HepG2 (cell line): ENCODE measurements at regions of chr2 and their contacts with region 1.

Region 1: DNA sequence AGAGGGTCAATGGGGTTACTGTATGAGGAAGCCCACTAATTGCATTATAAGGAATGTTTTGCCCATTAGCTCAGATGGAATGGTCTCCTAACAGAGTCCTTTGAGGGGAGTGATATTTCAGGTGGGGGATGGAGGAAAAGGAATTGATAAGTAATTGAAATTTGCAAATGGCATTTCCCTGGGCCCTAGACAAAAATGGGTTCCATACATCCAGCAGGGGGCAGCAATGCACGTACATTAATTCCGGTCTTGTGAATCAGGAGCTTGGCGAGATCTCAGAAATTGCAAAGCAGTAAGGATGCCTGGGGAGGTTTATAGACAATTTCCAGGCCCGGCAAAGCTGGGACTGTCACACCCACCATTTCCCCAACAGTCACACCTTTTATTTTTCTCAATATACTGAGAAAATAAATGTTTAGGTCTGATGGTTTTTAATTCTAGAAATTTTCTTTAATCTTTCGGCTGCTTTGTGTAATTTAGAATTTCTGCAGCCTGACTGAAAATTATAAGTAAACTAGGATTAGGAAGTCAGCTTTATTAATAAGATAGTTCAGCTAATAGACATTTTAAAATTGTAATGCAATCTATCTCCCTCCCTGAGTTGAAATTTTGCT is 122.8 kb downstream of the LYPD1 start:
- DNase-seq: peak; percentile 59
- ATAC-seq: peak; percentile 75
- H3K4me3 ChIP-seq: no peak overlapping the region
- H3K27ac ChIP-seq: no peak overlapping the region
- H3K4me1 ChIP-seq: no peaks in the 10 kb centered on the region
- H3K27me3 ChIP-seq: no peaks in the 10 kb centered on the region
- CTCF ChIP-seq: peak; percentile 78
- EP300 ChIP-seq: no peak
- POLR2A ChIP-seq: no peak
- RAD21 ChIP-seq: peak; percentile 56; the same call in 1 of the 2 replicates

Region 2: DNA sequence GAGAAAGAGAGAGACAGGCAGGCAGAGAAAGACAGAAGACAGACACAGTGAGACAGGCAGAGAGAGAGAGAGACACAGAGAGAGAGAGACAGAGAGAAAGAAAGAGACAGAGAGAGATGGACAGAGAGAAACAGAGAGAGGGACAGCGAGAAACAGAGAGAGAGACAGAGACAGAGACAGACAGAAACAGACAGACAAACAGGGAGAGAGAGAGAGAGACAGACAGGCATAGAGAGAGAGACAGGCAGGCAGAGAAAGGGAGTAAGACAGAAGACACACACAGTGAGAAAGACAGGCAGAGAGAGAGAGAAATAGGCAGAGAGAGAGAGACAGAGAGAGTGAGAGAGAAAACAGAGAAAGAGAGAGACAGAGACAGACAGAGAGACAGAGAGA is 280.1 kb before region 1 on chr2:
- CTCF ChIA-PET with region 1: interaction called, 3 read pairs
- POLR2A ChIA-PET with region 1: no interaction called
- in situ Hi-C with region 1: no loop called
- intact Hi-C with region 1: loop called (anchors 1 kb)
- DNase-seq: no peak
- ATAC-seq: no peak
- H3K4me3 ChIP-seq: no peak overlapping the region
- H3K27ac ChIP-seq: no peak overlapping the region
- H3K4me1 ChIP-seq: no peaks in the 10 kb centered on the region
- H3K27me3 ChIP-seq: 0 out of 5 replicates have a peak, but pooled peaks cover 0 to 7% of the 10 kb centered on the region in 2 experiments
- CTCF ChIP-seq: no peak
- EP300 ChIP-seq: no peak
- POLR2A ChIP-seq: no peak
- RAD21 ChIP-seq: no peak

Region 3: DNA sequence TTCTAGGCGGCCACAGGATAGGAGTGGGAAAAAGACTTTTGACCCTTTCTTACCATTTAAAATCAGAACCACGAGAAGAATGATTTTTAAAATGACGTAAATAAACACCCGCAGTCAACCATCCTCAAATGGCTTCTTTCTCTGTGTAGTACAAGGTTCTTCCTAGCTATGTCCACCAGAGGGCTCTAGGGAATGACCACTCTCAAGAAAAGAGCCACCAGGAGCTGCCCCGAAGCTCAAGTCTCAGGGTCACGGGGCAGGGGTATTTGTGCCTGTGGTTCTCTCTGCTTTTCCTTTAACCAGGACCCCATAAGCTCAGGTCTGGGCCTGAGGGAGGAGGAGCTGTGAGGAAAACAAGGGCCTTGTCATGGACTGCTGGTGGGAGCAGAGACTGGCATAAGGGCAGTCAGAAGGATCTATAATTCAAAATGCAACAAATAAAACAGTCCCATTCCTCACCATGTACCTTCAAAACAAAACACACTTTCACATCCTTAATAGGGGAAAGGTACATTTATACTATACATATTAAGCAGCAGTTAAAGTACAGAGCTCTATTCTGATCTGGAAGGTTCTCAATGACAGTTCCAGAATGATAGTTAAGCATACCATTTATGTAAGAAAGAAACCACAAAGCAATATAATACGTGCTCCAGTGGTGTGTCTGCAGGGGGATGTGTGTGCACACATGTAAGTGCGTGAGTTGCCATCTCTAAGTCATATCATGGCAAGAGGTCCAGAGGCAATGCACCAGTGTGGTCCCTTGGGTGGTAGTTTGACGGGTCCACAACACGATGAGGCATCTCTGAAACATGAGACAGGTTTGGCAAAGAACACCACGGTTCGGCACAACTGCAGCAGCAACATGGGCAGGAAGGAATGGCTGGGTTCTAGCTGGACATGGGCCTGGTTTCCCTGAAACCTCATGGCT is 104.2 kb after region 1 on chr2:
- CTCF ChIA-PET with region 1: no interaction called
- POLR2A ChIA-PET with region 1: no interaction called
- in situ Hi-C with region 1: no loop called
- intact Hi-C with region 1: loop called (anchors 5 kb)
- DNase-seq: peak; percentile 59
- ATAC-seq: peak; percentile 99
- H3K4me3 ChIP-seq: no peak overlapping the region
- H3K27ac ChIP-seq: no peak overlapping the region
- H3K4me1 ChIP-seq: no peaks in the 10 kb centered on the region
- H3K27me3 ChIP-seq: no peaks in the 10 kb centered on the region
- CTCF ChIP-seq: peak; percentile 76
- EP300 ChIP-seq: no peak
- POLR2A ChIP-seq: no peak
- RAD21 ChIP-seq: 0 out of 2 replicates have a peak, but pooled peaks have one; percentile 39

Region 4: GRCh38 chr2:132676999-132677398 is 129.8 kb after region 1 on chr2:
- CTCF ChIA-PET with region 1: no interaction called
- POLR2A ChIA-PET with region 1: no interaction called
- in situ Hi-C with region 1: no loop called
- intact Hi-C with region 1: no loop called
- DNase-seq: no peak
- ATAC-seq: no peak
- H3K4me3 ChIP-seq: no peak overlapping the region
- H3K27ac ChIP-seq: no peak overlapping the region
- H3K4me1 ChIP-seq: no peaks in the 10 kb centered on the region
- H3K27me3 ChIP-seq: no peaks in the 10 kb centered on the region
- CTCF ChIP-seq: no peak
- EP300 ChIP-seq: no peak
- POLR2A ChIP-seq: no peak
- RAD21 ChIP-seq: no peak

Region 5: GRCh38 chr2:132857319-132857718 is 310.1 kb after region 1 on chr2:
- CTCF ChIA-PET with region 1: no interaction called
- POLR2A ChIA-PET with region 1: no interaction called
- in situ Hi-C with region 1: no loop called
- intact Hi-C with region 1: loop called (anchors 2 kb)
- DNase-seq: no peak
- ATAC-seq: no peak
- H3K4me3 ChIP-seq: no peak overlapping the region
- H3K27ac ChIP-seq: no peak overlapping the region
- H3K4me1 ChIP-seq: peaks cover 9% of the 10 kb centered on the region
- H3K27me3 ChIP-seq: no peaks in the 10 kb centered on the region
- CTCF ChIP-seq: no peak
- EP300 ChIP-seq: no peak
- POLR2A ChIP-seq: no peak
- RAD21 ChIP-seq: no peak

Region 6: DNA sequence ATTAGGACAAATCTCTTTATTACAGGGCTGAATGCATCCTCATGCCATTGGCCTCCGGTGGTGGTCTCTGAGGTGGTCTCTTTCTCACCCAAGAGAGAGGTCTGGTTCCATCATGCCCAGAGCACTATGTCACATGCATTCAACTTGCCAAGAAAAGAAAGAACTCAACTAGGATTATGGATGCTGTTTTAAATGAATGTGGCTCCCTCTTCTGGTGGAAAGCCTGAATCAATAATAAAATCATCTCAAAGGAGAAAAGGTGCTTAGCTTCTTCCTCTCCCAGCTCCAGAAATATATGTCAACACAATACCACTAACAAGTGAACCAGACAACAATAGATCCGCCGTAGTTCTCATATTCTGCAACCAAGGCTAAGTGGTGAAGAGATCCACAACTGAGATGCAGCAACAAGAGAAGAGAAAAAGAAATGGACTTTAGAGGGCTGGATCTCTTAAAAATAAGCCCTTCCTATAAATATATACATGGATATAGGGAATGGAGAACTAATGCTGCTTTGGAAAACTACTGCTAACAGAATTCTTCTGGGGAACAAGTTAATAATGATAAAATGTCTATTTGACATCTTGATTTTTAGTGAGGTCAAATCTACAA is 624.3 kb after region 1 on chr2:
- CTCF ChIA-PET with region 1: interaction called, 14 read pairs
- POLR2A ChIA-PET with region 1: no interaction called
- in situ Hi-C with region 1: loop called (anchors 5 kb)
- intact Hi-C with region 1: no loop called
- DNase-seq: peak; percentile 58
- ATAC-seq: peak; percentile 73
- H3K4me3 ChIP-seq: no peak overlapping the region
- H3K27ac ChIP-seq: no peak overlapping the region
- H3K4me1 ChIP-seq: no peaks in the 10 kb centered on the region
- H3K27me3 ChIP-seq: no peaks in the 10 kb centered on the region
- CTCF ChIP-seq: peak; percentile 84
- EP300 ChIP-seq: no peak
- POLR2A ChIP-seq: no peak
- RAD21 ChIP-seq: peak; percentile 75

Region 7: DNA sequence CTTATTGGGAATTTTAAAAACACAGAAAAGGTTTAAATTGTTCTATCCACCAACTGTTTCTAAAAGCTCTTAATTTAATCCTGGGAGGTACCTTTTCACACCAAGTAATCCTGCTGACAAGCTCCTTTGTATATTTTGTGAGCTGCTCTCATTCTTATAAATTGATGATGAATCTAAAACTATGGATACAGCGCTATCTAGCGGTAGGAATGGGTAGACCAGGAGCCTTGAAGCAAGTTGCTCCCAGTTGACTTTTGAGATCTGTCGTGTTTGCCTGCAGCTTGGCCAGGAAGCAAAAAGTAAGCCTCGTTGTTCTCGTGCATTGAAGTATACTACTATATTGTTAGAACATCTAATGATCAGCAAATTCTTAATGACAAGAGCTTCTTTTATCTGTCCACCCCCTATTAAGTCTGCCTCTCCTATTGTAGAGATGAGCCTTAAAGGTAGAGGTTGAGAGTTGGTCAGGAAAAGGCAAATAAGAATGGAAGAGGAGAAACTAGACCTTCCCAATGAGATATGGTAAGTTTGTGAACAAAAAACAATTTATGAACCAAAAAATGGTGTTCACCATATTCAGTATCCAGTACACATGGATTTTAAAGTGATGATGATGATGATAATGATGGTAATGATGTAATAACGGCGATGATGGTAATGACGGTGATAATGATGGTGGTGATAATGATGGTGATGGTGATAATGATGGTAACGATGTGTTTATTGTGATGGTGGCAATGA is 1233.1 kb after region 1 on chr2:
- CTCF ChIA-PET with region 1: interaction called, 5 read pairs
- POLR2A ChIA-PET with region 1: no interaction called
- in situ Hi-C with region 1: no loop called
- intact Hi-C with region 1: loop called (anchors 2 kb)
- DNase-seq: peak; percentile 70
- ATAC-seq: peak; percentile 83
- H3K4me3 ChIP-seq: no peak overlapping the region
- H3K27ac ChIP-seq: no peak overlapping the region
- H3K4me1 ChIP-seq: peaks cover 9% of the 10 kb centered on the region
- H3K27me3 ChIP-seq: peaks cover 0 to 5% of the 10 kb centered on the region in 2 experiments; a peak in 2 of 5 replicates
- CTCF ChIP-seq: peak; percentile 84
- EP300 ChIP-seq: no peak
- POLR2A ChIP-seq: no peak
- RAD21 ChIP-seq: peak; percentile 53; the same call in 1 of the 2 replicates